ENCODE measurements at regions of chr17 and their contacts with region 1.

Region 1: DNA sequence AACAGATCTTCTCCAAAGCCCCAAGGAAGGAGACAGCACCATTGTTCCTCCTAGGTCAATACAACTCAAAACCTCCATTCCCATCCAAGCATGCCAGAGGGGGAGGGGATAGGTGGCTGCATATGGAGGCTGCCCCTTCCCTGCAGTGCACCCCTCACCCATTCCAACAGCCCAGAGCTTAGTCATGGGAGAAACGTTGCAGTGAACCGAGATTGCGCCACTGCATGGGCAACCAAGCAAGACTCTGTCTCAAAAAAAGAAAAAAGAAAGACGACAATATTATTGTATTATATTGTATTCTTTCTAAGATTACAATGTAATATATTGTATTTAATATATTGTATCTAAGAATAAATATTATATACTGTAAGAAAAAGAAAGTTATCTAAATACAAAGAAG is 36.4 kb upstream of the CD300E start:
- DNase-seq: no peak
- ATAC-seq: no peak
- H3K4me3 Mint-ChIP-seq: no peak overlapping the region
- H3K27ac Mint-ChIP-seq: no peak overlapping the region
- H3K4me1 Mint-ChIP-seq: peaks cover 7% of the 10 kb centered on the region
- H3K27me3 Mint-ChIP-seq: peaks cover 62% of the 10 kb centered on the region

Region 2: GRCh38 chr17:74598346-74599022 is 61.4 kb before region 1 on chr17:
- CTCF ChIA-PET with region 1: no interaction called
- DNase-seq: no peak
- ATAC-seq: no peak
- H3K4me3 Mint-ChIP-seq: no peak overlapping the region
- H3K27ac Mint-ChIP-seq: no peak overlapping the region
- H3K4me1 Mint-ChIP-seq: peaks cover 21% of the 10 kb centered on the region
- H3K27me3 Mint-ChIP-seq: peaks cover 47% of the 10 kb centered on the region

Region 3: GRCh38 chr17:74671031-74671771 is 11.3 kb after region 1 on chr17:
- CTCF ChIA-PET with region 1: interaction called, 34 read pairs
- DNase-seq: peak; percentile 82
- ATAC-seq: peak; percentile 89
- H3K4me3 Mint-ChIP-seq: no peak overlapping the region
- H3K27ac Mint-ChIP-seq: no peak overlapping the region
- H3K4me1 Mint-ChIP-seq: no peaks in the 10 kb centered on the region
- H3K27me3 Mint-ChIP-seq: peaks cover 76% of the 10 kb centered on the region

Region 4: DNA sequence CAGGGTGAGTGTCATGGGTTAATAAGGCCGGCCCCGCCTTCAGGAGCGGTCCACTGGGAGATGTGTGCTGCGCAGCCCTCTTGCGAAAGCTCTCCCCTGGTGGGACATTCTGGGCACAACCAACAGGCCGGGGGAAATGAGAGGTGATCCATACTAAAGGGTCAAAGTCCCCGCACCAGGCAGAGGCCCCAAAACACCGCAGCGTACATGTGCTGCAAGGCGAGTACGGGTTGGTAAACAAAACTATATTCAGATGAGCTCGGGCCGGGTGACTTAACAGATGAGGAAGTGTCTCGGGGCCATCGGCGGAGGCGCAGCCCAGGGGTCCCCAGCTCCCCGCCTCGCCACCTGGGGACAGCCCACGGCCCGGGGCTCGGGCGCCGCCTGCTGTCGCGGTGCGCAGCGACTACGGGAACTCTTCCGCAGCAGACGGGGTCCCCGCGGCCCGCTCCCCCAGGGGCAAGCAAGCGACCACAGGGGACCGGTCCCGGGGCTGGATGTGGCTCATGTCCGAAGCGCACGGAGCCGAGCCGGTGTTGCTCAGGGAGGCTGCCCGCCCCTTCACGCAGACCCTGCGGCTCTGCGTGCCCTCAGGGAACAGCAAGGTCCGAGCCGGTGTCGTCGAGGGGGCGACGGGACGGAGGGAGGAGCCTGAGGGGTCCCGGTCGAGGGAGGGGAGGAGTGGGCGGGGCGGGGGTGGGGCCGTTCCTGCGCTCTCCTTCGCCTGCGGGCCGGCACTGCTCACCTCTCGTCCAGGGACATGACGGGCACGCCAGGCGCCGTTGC is 76.8 kb after region 1 on chr17 and contains the start of gene RAB37:
- CTCF ChIA-PET with region 1: interaction called, 262 read pairs
- DNase-seq: peak; percentile 67
- ATAC-seq: peak; percentile 37
- H3K4me3 Mint-ChIP-seq: peak within 1 kb of the TSS; percentile 87
- H3K27ac Mint-ChIP-seq: peak within 1 kb of the TSS; percentile 91
- H3K4me1 Mint-ChIP-seq: peaks cover 47% of the 10 kb centered on the region
- H3K27me3 Mint-ChIP-seq: peaks cover 17% of the 10 kb centered on the region
- total RNA-seq, gene RAB37: 36.7 to 51.7 TPM

Region 5: GRCh38 chr17:74759243-74759801 is 99.4 kb after region 1 on chr17:
- CTCF ChIA-PET with region 1: interaction called, 47 read pairs
- DNase-seq: peak; percentile 85
- ATAC-seq: peak; percentile 83
- H3K4me3 Mint-ChIP-seq: peak overlapping the region; percentile 67
- H3K27ac Mint-ChIP-seq: peak overlapping the region; percentile 88
- H3K4me1 Mint-ChIP-seq: peaks cover 70% of the 10 kb centered on the region
- H3K27me3 Mint-ChIP-seq: no peaks in the 10 kb centered on the region

Region 6: GRCh38 chr17:74786431-74787055 is 126.6 kb after region 1 on chr17:
- CTCF ChIA-PET with region 1: interaction called, 29 read pairs
- DNase-seq: no peak
- ATAC-seq: no peak
- H3K4me3 Mint-ChIP-seq: no peak overlapping the region
- H3K27ac Mint-ChIP-seq: peak overlapping the region; percentile 2
- H3K4me1 Mint-ChIP-seq: peaks cover 45% of the 10 kb centered on the region
- H3K27me3 Mint-ChIP-seq: no peaks in the 10 kb centered on the region